Gastrocnemius medialis (tissue), 4 donors: ENCODE measurements at regions of chr19 and their contacts with region 1.

Region 1: DNA sequence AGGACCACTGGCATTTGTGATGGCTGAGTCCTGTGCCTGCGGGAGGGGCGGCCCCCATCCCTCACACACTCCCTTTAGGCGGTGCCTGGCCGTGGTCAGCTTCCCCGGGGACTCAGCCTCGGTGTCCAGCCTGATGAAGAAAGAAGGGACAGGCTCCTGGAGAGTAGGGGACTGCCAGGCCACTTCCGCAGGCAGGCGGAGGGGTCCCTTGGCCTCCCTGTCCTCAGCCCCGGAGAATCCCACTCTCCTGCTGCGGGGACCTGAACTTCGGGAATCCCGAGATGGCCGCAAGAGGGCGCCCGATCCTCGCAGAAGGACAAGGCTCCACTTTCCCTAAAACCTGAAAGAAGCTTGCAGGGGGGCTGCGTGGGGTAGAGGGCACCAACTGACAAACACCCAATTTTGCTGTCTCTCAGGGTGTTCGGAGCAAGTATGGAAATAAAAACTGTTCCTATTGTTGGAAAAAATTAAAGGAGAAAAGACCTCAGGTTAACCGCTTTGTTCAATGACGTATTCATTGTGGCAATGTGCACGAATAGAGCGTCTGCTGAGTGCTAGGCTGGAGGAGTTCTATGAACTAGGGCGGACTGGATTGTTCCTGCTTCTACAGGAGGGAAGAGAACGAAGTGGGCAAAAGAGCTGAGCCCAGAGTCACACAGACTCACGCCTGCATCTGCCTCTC is 297.3 kb downstream of the ZNF536 start:
- DNase-seq: no peak
- ATAC-seq: no peak
- H3K4me3 ChIP-seq: no peak overlapping the region
- H3K27ac ChIP-seq: no peak overlapping the region
- H3K4me1 ChIP-seq: peaks cover 4 to 16% of the 10 kb centered on the region in 2 donors
- H3K27me3 ChIP-seq: peaks cover 0 to 9% (median 7%) of the 10 kb centered on the region in 3 donors
- CTCF ChIP-seq: peak; percentile 37 to 70 (median 58)
- POLR2A ChIP-seq: no peak

Region 2: DNA sequence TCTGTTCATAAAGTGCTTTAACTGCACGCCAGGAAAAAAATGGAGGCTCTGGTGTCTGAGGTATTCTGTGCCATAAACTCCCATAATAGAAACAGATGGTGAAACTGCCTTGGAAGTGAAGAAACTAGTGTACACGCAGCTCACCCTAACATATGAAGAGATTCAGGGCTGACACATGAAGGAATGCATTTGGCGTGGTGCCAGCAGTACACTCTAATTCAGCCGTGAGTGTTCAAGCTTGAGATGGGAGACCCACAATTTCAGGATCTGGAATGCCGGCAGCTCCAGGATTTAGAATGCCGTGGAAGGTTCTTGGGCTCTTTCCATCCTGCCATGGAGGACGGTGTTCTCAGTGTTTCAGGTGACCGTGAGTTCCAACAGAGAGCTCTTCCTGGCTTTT is 201.4 kb after region 1 on chr19:
- in situ Hi-C with region 1: no loop called
- intact Hi-C with region 1: no loop called
- DNase-seq: no peak
- ATAC-seq: no peak
- H3K4me3 ChIP-seq: no peak overlapping the region
- H3K27ac ChIP-seq: no peak overlapping the region
- H3K4me1 ChIP-seq: no peaks in the 10 kb centered on the region
- H3K27me3 ChIP-seq: no peaks in the 10 kb centered on the region
- CTCF ChIP-seq: no peak
- POLR2A ChIP-seq: no peak

Region 3: GRCh38 chr19:32041681-32042292 is 1372.3 kb after region 1 on chr19:
- in situ Hi-C with region 1: no loop called
- intact Hi-C with region 1: loop called (anchors 5 kb)
- DNase-seq: no peak
- ATAC-seq: no peak
- H3K4me3 ChIP-seq: peak overlapping the region in 3 of 4 donors; percentile 2 to 12 (median 10)
- H3K27ac ChIP-seq: no peak overlapping the region
- H3K4me1 ChIP-seq: no peaks in the 10 kb centered on the region
- H3K27me3 ChIP-seq: peaks cover 10 to 18% (median 18%) of the 10 kb centered on the region in 3 donors
- CTCF ChIP-seq: peak in 3 of 5 experiments; percentile 23 to 51 (median 24)
- POLR2A ChIP-seq: no peak

Region 4: DNA sequence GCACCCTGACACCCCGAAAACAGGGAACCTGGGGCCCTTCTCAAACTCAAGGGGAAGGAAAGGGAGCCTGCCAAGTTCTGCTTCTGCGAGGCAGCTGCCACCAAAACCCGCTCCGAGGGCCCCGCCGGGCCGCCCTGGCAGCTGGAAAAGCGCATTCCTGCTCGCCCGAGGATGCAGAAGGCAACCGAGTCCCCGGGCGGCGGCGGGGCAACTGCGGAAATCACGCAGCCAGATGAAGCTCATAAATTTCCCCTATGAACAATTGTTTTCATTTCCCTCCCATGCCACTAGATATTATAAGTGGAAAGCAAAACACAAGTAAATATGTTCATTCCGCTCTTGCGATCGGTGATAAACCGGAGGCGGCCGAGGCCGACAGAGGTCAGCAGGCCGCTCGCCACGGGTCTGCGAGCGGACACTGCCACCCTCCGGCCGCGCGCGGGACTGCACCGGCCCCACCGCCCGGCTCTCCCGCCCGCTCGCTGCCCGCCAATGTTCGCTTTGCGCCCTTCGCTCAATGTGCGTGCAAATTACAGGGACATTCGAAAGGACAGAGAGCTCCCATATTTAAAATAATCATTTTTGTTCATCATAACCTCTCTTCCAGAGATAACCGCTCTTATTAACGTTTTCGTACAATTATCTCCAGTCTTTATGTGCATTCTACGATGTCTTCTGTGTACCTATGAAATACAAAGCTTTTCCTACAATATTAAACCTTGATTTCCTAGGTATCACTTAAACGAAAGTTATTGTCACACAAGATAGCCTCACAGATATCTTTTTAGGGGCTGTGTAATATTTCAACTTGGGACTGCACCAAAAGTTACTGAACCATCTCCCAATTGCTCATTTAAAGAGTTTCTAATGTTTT is 1555.1 kb after region 1 on chr19:
- in situ Hi-C with region 1: loop called in 2 of 4 experiments (anchors 5 to 25 kb)
- intact Hi-C with region 1: loop called (anchors 1 kb)
- DNase-seq: peak in 1 of 2 donors; percentile 12
- ATAC-seq: peak; percentile 73 to 80
- H3K4me3 ChIP-seq: peak overlapping the region in 2 of 4 donors; percentile 29 to 35
- H3K27ac ChIP-seq: no peak overlapping the region
- H3K4me1 ChIP-seq: no peaks in the 10 kb centered on the region
- H3K27me3 ChIP-seq: no peaks in the 10 kb centered on the region
- CTCF ChIP-seq: peak; percentile 76 to 99 (median 88)
- POLR2A ChIP-seq: no peak

Region 5: DNA sequence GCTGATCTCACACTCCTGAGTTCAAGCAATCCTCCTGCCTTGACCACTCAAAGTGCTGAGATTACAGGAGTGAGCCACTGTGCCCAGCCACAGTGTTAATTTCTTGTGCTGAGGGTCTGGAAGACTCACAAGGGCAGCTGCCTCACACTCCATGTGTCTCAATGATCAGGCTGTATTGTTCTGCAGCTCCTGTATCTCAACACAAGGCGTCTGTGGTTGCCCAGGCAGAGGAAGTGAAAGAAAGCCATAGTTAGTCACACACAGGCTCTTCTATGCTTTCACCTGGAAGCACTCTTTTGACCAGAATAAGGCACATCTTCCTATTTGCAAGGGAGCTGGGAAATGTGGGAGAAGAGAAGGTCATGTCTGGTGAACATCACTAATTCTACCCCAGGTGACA is 1568.6 kb after region 1 on chr19:
- in situ Hi-C with region 1: loop called in 3 of 4 experiments (anchors 10 to 25 kb)
- intact Hi-C with region 1: no loop called
- DNase-seq: no peak
- ATAC-seq: no peak
- H3K4me3 ChIP-seq: no peak overlapping the region
- H3K27ac ChIP-seq: no peak overlapping the region
- H3K4me1 ChIP-seq: no peaks in the 10 kb centered on the region
- H3K27me3 ChIP-seq: peaks cover 0 to 2% (median 0%) of the 10 kb centered on the region in 3 donors
- CTCF ChIP-seq: no peak
- POLR2A ChIP-seq: no peak